B cell (primary cell): ENCODE measurements at regions of chr3 and their contacts with region 1.

Region 1: DNA sequence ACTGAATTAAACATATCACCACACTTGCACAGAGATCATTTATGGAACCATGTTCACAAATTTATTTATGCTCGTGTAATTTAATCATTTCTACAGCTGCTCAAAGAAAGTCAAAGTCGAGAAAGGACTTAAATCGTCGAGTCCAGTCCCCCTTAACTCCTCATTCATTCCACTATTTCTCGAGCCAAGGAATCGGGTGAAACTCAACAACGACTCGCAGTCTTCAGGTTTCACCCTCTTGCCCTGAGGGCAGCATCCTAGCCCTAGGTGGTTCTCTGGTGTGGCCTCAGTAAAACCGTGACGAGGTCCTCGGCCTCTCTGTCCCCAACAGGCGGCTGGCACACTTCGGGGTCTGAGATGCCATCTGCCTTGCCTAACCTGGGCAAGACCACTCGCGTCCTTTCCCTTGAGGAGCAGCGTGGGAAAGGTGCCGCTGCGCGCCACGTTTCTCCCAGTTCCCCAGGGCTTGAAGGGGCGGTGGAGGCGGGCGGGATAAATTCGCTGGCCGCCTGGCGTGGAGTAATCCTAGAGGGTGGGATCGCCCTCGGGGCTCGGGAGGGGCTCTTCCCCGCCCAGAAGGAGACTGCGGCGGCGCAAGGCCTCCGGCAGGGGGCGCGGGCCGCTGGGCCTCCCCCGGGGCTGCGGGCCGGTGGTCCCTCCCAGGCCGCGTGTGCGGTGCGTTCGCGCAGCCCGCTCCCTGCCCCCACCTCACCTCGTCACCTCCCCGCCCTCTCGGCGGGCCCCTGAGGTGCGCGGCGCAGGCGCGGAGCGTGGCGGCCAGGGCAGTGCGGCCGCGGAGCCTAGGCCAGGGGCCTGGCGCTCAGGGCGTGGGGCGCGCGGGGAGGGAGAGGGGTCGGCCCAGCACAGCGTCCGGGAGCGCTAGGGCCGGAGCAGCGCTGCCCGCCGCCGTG is at the start of gene ZNF639:
- DNase-seq: peak; percentile 93
- ATAC-seq: peak; percentile 84
- H3K4me3 ChIP-seq: peak within 1 kb of the TSS; percentile 85 to 97 (median 92)
- H3K4me3 Mint-ChIP-seq: peak within 1 kb of the TSS; percentile 96
- H3K27ac ChIP-seq: peak within 1 kb of the TSS; percentile 89 to 99
- H3K27ac Mint-ChIP-seq: peak within 1 kb of the TSS; percentile 95
- H3K4me1 ChIP-seq: peaks cover 25% of the 10 kb centered on the region in 2 donors
- H3K4me1 Mint-ChIP-seq: peaks cover 30% of the 10 kb centered on the region
- H3K27me3 ChIP-seq: no peaks in the 10 kb centered on the region
- H3K27me3 Mint-ChIP-seq: no peaks in the 10 kb centered on the region
- CTCF ChIP-seq: peak; percentile 87
- total RNA-seq, gene ZNF639: 39.8 and 43.1 TPM in 2 replicates

Region 2: DNA sequence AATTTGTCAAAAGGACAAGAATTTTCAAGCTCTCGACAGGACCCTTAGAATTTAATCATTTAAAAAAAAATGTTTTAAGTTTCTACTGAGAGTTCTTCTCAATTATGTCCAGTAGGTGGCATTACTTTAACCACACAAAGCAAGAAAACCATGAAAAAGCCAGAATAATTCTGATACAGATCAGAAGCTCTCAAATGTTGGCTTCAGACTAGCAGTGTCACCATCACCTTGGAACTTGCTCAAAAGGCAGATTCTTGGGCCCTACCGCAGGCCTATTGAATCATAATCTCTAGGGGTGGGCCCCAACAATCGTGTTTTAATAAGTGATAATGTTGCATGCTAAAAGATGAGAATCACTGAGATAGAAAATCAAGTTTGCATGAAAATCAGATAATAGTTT is 885.8 kb before region 1 on chr3:
- CTCF ChIA-PET with region 1: no interaction called
- POLR2A ChIA-PET with region 1: no interaction called
- intact Hi-C with region 1: loop called (anchors 5 kb)
- DNase-seq: peak; percentile 9
- ATAC-seq: no peak
- H3K4me3 ChIP-seq: no peak overlapping the region
- H3K4me3 Mint-ChIP-seq: no peak overlapping the region
- H3K27ac ChIP-seq: no peak overlapping the region
- H3K27ac Mint-ChIP-seq: no peak overlapping the region
- H3K4me1 ChIP-seq: no peaks in the 10 kb centered on the region
- H3K4me1 Mint-ChIP-seq: peaks cover 2% of the 10 kb centered on the region
- H3K27me3 ChIP-seq: no peaks in the 10 kb centered on the region
- H3K27me3 Mint-ChIP-seq: peaks cover 5% of the 10 kb centered on the region
- CTCF ChIP-seq: peak; percentile 56

Region 3: DNA sequence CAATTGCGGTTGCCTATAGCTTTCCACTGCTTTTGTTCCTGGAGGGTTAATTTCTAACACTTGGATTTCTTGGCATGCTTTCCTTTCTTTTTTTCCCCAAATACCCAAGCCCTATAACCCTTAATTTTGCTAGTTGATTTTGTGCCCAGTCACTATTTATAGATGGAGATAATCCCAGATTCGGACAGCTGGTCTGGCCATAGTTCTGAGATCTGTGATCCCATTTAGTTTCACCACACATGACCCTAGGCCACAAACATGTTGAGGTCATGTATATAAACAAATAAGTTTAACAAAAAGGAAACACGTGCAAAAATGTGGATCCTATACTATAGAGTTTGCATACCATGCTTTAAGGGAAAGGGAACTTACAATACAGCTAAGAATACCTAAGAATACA is 362.4 kb before region 1 on chr3:
- CTCF ChIA-PET with region 1: no interaction called
- POLR2A ChIA-PET with region 1: no interaction called
- intact Hi-C with region 1: no loop called
- DNase-seq: no peak
- ATAC-seq: no peak
- H3K4me3 ChIP-seq: no peak overlapping the region
- H3K4me3 Mint-ChIP-seq: no peak overlapping the region
- H3K27ac ChIP-seq: no peak overlapping the region
- H3K27ac Mint-ChIP-seq: no peak overlapping the region
- H3K4me1 ChIP-seq: no peaks in the 10 kb centered on the region
- H3K4me1 Mint-ChIP-seq: no peaks in the 10 kb centered on the region
- H3K27me3 ChIP-seq: peaks cover 0 to 7% (median 0%) of the 10 kb centered on the region in 4 experiments
- H3K27me3 Mint-ChIP-seq: no peaks in the 10 kb centered on the region
- CTCF ChIP-seq: no peak

Region 4: DNA sequence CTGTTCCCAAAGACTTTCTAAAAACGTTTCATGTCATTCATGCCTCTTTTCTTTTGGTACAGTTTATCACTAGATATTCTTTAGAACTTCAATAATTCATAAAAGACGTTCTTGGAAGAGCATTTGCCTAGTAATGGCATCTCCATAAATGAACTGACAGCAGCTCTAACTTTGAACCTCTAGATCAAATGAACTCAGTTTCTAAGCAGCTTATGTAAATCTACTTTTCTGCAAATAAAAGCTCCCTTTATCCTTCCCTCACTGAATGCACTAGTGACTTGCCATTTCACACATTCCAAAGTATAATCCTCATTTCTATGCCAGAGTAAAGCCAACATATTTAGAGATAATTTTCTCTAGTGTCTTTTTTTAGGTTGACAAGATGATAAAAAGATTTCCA is 336.1 kb before region 1 on chr3:
- CTCF ChIA-PET with region 1: no interaction called
- POLR2A ChIA-PET with region 1: no interaction called
- intact Hi-C with region 1: no loop called
- DNase-seq: no peak
- ATAC-seq: no peak
- H3K4me3 ChIP-seq: no peak overlapping the region
- H3K4me3 Mint-ChIP-seq: no peak overlapping the region
- H3K27ac ChIP-seq: no peak overlapping the region
- H3K27ac Mint-ChIP-seq: no peak overlapping the region
- H3K4me1 ChIP-seq: no peaks in the 10 kb centered on the region
- H3K4me1 Mint-ChIP-seq: peaks cover 2% of the 10 kb centered on the region
- H3K27me3 ChIP-seq: no peaks in the 10 kb centered on the region
- H3K27me3 Mint-ChIP-seq: no peaks in the 10 kb centered on the region
- CTCF ChIP-seq: no peak

Region 5: DNA sequence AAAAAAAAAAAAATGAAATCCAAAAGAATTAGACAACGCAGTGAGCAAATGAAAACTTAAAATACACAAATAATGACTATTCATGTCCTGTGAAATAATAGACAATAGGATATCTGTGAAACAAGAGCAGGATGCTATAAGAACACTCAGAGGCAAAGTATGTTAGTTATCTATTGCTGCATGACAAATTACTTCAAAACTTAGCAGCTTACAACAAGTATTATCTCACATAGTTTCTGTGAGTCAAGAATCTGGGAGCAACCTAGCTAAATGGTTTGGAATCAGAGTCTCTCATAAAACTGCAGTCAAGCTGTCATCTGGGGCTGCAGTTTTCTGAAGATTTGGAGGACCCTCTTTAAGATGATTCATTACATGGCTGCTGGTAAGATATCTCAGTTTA is 214.5 kb before region 1 on chr3:
- CTCF ChIA-PET with region 1: interaction called, 28 read pairs
- POLR2A ChIA-PET with region 1: no interaction called
- intact Hi-C with region 1: no loop called
- DNase-seq: no peak
- ATAC-seq: no peak
- H3K4me3 ChIP-seq: no peak overlapping the region
- H3K4me3 Mint-ChIP-seq: no peak overlapping the region
- H3K27ac ChIP-seq: no peak overlapping the region
- H3K27ac Mint-ChIP-seq: no peak overlapping the region
- H3K4me1 ChIP-seq: no peaks in the 10 kb centered on the region
- H3K4me1 Mint-ChIP-seq: no peaks in the 10 kb centered on the region
- H3K27me3 ChIP-seq: peaks cover 0 to 3% (median 0%) of the 10 kb centered on the region in 4 experiments
- H3K27me3 Mint-ChIP-seq: peaks cover 23% of the 10 kb centered on the region
- CTCF ChIP-seq: no peak

Region 6: GRCh38 chr3:179309225-179310078 is 13.1 kb before region 1 on chr3:
- CTCF ChIA-PET with region 1: interaction called, 18 read pairs
- POLR2A ChIA-PET with region 1: no interaction called
- intact Hi-C with region 1: no loop called
- DNase-seq: peak; percentile 63
- ATAC-seq: peak; percentile 86
- H3K4me3 ChIP-seq: peak overlapping the region in 2 of 5 experiments; percentile 3 to 5
- H3K4me3 Mint-ChIP-seq: no peak overlapping the region
- H3K27ac ChIP-seq: peak overlapping the region in 1 of 2 donors; percentile 11
- H3K27ac Mint-ChIP-seq: no peak overlapping the region
- H3K4me1 ChIP-seq: peaks cover 15 to 17% of the 10 kb centered on the region in 2 donors
- H3K4me1 Mint-ChIP-seq: peaks cover 6% of the 10 kb centered on the region
- H3K27me3 ChIP-seq: no peaks in the 10 kb centered on the region
- H3K27me3 Mint-ChIP-seq: no peaks in the 10 kb centered on the region
- CTCF ChIP-seq: no peak

Region 7: GRCh38 chr3:179451265-179452175 is 129.0 kb after region 1 on chr3 and contains the start of gene GNB4:
- CTCF ChIA-PET with region 1: interaction called, 3 read pairs
- POLR2A ChIA-PET with region 1: no interaction called
- intact Hi-C with region 1: loop called (anchors 2 kb)
- DNase-seq: peak; percentile 91
- ATAC-seq: peak; percentile 86
- H3K4me3 ChIP-seq: peak within 1 kb of the TSS; percentile 70 to 92 (median 78)
- H3K4me3 Mint-ChIP-seq: peak within 1 kb of the TSS; percentile 97
- H3K27ac ChIP-seq: peak within 1 kb of the TSS; percentile 57 to 75
- H3K27ac Mint-ChIP-seq: peak within 1 kb of the TSS; percentile 94
- H3K4me1 ChIP-seq: peaks cover 16 to 19% of the 10 kb centered on the region in 2 donors
- H3K4me1 Mint-ChIP-seq: peaks cover 44% of the 10 kb centered on the region
- H3K27me3 ChIP-seq: no peaks in the 10 kb centered on the region
- H3K27me3 Mint-ChIP-seq: no peaks in the 10 kb centered on the region
- CTCF ChIP-seq: no peak
- total RNA-seq, gene GNB4: 24.0 and 24.6 TPM in 2 replicates

Region 8: GRCh38 chr3:179604321-179605078 is 282.0 kb after region 1 on chr3 and contains the starts of genes MRPL47 and NDUFB5:
- CTCF ChIA-PET with region 1: no interaction called
- POLR2A ChIA-PET with region 1: no interaction called
- intact Hi-C with region 1: loop called (anchors 2 kb)
- DNase-seq: peak; percentile 96
- ATAC-seq: peak; percentile 98
- H3K4me3 ChIP-seq: peak within 1 kb of the TSS; percentile 65 to 96 (median 80)
- H3K4me3 Mint-ChIP-seq: peak within 1 kb of the TSS; percentile 99
- H3K27ac ChIP-seq: peak within 1 kb of the TSS; percentile 72 to 97
- H3K27ac Mint-ChIP-seq: peak within 1 kb of the TSS; percentile 98
- H3K4me1 ChIP-seq: peaks cover 39 to 44% of the 10 kb centered on the region in 2 donors
- H3K4me1 Mint-ChIP-seq: peaks cover 51% of the 10 kb centered on the region
- H3K27me3 ChIP-seq: no peaks in the 10 kb centered on the region
- H3K27me3 Mint-ChIP-seq: no peaks in the 10 kb centered on the region
- CTCF ChIP-seq: no peak
- total RNA-seq, gene MRPL47: 20.2 and 22.0 TPM in 2 replicates
- total RNA-seq, gene NDUFB5: 52.9 and 60.2 TPM in 2 replicates